ENCODE measurements at regions of chr9 and their contacts with region 1.

Region 1: GRCh38 chr9:84271531-84271900 is 69.0 kb downstream of the SLC28A3 start:
- DNase-seq: peak; percentile 73
- ATAC-seq: peak; percentile 94
- H3K4me3 Mint-ChIP-seq: peak overlapping the region; percentile 65
- H3K27ac Mint-ChIP-seq: no peak overlapping the region
- H3K4me1 Mint-ChIP-seq: peaks cover 12% of the 10 kb centered on the region
- H3K27me3 Mint-ChIP-seq: peaks cover 25% of the 10 kb centered on the region

Region 2: GRCh38 chr9:84254972-84255371 is 16.5 kb before region 1 on chr9:
- CTCF ChIA-PET with region 1: no interaction called
- POLR2A ChIA-PET with region 1: no interaction called
- DNase-seq: no peak
- ATAC-seq: no peak
- H3K4me3 Mint-ChIP-seq: no peak overlapping the region
- H3K27ac Mint-ChIP-seq: no peak overlapping the region
- H3K4me1 Mint-ChIP-seq: no peaks in the 10 kb centered on the region
- H3K27me3 Mint-ChIP-seq: peaks cover 35% of the 10 kb centered on the region

Region 3: GRCh38 chr9:84285381-84285780 is 13.9 kb after region 1 on chr9:
- CTCF ChIA-PET with region 1: interaction called, 10 read pairs
- POLR2A ChIA-PET with region 1: interaction called, 3 read pairs
- DNase-seq: no peak
- ATAC-seq: no peak
- H3K4me3 Mint-ChIP-seq: no peak overlapping the region
- H3K27ac Mint-ChIP-seq: no peak overlapping the region
- H3K4me1 Mint-ChIP-seq: peaks cover 20% of the 10 kb centered on the region
- H3K27me3 Mint-ChIP-seq: peaks cover 11% of the 10 kb centered on the region